CD4-positive, alpha-beta T cell (primary cell): ENCODE measurements at regions of chr3 and their contacts with region 1.

Region 1: GRCh38 chr3:32510075-32510724 is 7.5 kb upstream of the CMTM6 start:
- DNase-seq: peak; percentile 40 to 81 (median 58)
- ATAC-seq: peak; percentile 92
- H3K4me3 ChIP-seq: no peak overlapping the region
- H3K4me3 Mint-ChIP-seq: no peak overlapping the region
- H3K27ac ChIP-seq: no peak overlapping the region
- H3K27ac Mint-ChIP-seq: no peak overlapping the region
- H3K4me1 ChIP-seq: no peaks in the 10 kb centered on the region
- H3K4me1 Mint-ChIP-seq: no peaks in the 10 kb centered on the region
- H3K27me3 ChIP-seq: no peaks in the 10 kb centered on the region
- H3K27me3 Mint-ChIP-seq: no peaks in the 10 kb centered on the region
- CTCF ChIP-seq: peak; percentile 79

Region 2: GRCh38 chr3:32525720-32526119 is 15.5 kb after region 1 on chr3:
- CTCF ChIA-PET with region 1: no interaction called
- POLR2A ChIA-PET with region 1: no interaction called
- intact Hi-C with region 1: no loop called
- DNase-seq: no peak
- ATAC-seq: no peak
- H3K4me3 ChIP-seq: no peak overlapping the region
- H3K4me3 Mint-ChIP-seq: no peak overlapping the region
- H3K27ac ChIP-seq: no peak overlapping the region
- H3K27ac Mint-ChIP-seq: no peak overlapping the region
- H3K4me1 ChIP-seq: no peaks in the 10 kb centered on the region
- H3K4me1 Mint-ChIP-seq: no peaks in the 10 kb centered on the region
- H3K27me3 ChIP-seq: no peaks in the 10 kb centered on the region
- H3K27me3 Mint-ChIP-seq: no peaks in the 10 kb centered on the region
- CTCF ChIP-seq: no peak

Region 3: DNA sequence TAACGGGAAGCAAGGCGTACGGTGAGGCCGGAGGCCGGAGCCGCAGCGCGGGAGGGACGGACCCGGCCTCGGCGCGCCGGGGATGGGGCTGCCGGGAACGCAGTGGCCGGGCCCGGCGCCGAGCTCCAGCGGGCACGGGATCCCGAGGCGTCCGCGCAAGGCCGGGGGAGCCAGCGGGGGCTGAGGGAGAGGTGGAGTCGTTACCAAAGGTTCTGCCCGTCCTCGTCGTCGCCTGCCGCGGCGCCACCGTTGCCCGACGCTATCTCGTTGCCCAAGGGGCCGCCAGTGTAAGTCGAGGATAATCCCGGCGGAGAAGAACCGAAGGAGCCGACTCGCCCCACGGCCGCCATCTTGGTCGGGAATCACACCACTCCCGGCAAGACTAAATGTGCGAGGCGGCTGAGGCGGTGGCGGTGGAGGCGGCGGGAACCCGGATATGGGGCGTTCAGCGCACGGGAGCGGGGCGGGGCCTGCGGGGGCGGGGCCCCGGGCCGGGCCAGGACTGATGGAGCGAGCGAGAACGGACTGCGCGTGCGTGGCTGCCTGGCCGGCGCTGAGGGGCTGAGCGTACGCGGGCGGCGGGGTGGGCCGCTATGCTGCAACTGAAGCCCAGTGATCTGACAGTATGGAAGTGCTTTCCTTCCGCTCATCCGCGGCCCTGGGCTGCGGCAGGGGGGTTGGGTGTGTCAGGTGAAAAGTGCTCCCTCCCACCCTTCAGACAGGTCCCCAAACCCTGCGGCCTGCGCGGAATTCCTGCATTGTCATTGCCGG is 60.4 kb after region 1 on chr3 and contains the start of gene DYNC1LI1:
- CTCF ChIA-PET with region 1: interaction called, 3 read pairs
- POLR2A ChIA-PET with region 1: no interaction called
- intact Hi-C with region 1: loop called (anchors 2 to 10 kb)
- DNase-seq: peak; percentile 85 to 97 (median 92)
- ATAC-seq: peak; percentile 95
- H3K4me3 ChIP-seq: peak within 1 kb of the TSS; percentile 76
- H3K4me3 Mint-ChIP-seq: peak within 1 kb of the TSS; percentile 94
- H3K27ac ChIP-seq: peak within 1 kb of the TSS; percentile 72
- H3K27ac Mint-ChIP-seq: peak within 1 kb of the TSS; percentile 74
- H3K4me1 ChIP-seq: peaks cover 20% of the 10 kb centered on the region
- H3K4me1 Mint-ChIP-seq: peaks cover 40% of the 10 kb centered on the region
- H3K27me3 ChIP-seq: no peaks in the 10 kb centered on the region
- H3K27me3 Mint-ChIP-seq: no peaks in the 10 kb centered on the region
- CTCF ChIP-seq: no peak
- total RNA-seq, gene DYNC1LI1: 28.1 to 28.3 TPM

Region 4: GRCh38 chr3:32667122-32667521 is 156.9 kb after region 1 on chr3:
- CTCF ChIA-PET with region 1: no interaction called
- POLR2A ChIA-PET with region 1: no interaction called
- intact Hi-C with region 1: loop called (anchors 1 kb)
- DNase-seq: no peak
- ATAC-seq: no peak
- H3K4me3 ChIP-seq: no peak overlapping the region
- H3K4me3 Mint-ChIP-seq: no peak overlapping the region
- H3K27ac ChIP-seq: no peak overlapping the region
- H3K27ac Mint-ChIP-seq: no peak overlapping the region
- H3K4me1 ChIP-seq: no peaks in the 10 kb centered on the region
- H3K4me1 Mint-ChIP-seq: no peaks in the 10 kb centered on the region
- H3K27me3 ChIP-seq: no peaks in the 10 kb centered on the region
- H3K27me3 Mint-ChIP-seq: peaks cover 3% of the 10 kb centered on the region
- CTCF ChIP-seq: no peak

Region 5: DNA sequence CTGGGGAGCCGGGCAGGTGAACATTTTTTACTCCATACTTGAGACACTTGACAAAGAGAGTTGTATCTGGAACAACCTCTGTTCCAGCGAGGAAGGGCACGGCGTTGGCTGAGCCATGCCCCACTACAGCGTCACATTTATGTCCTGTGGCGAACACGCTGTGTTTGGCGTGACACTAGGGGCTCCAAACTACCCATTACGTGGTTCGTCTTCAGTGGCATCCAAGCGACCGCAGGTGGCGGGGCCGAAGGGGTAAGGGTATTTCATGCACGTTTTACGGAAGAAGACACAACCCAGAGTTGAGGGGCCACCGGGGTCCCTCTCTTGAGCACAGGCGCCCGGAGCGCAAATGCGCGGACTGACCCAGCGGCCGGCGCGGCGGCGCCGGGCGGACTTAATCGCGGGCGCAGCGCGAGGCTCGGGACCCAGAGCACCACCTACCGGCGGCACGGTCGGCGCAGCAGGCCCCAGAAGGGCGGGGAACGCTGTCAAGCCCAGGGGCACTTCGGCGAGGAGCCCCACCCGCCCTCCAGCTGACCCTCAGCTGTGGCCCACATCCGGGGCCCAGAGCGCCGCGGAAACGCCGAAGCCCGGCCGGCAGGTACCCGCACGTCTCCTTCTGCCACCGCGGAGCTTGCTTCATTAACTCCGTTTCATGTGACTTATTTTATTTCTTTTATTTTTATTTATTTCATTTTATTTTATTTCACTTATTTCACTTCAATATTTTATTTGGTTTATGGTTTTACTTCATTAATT is 271.2 kb after region 1 on chr3:
- CTCF ChIA-PET with region 1: no interaction called
- POLR2A ChIA-PET with region 1: no interaction called
- intact Hi-C with region 1: loop called (anchors 2 to 5 kb)
- DNase-seq: peak; percentile 7 to 76 (median 48)
- ATAC-seq: peak; percentile 73
- H3K4me3 ChIP-seq: peak overlapping the region; percentile 63
- H3K4me3 Mint-ChIP-seq: peak overlapping the region; percentile 92
- H3K27ac ChIP-seq: no peak overlapping the region
- H3K27ac Mint-ChIP-seq: no peak overlapping the region
- H3K4me1 ChIP-seq: peaks cover 14% of the 10 kb centered on the region
- H3K4me1 Mint-ChIP-seq: peaks cover 4% of the 10 kb centered on the region
- H3K27me3 ChIP-seq: peaks cover 0 to 4% of the 10 kb centered on the region in 2 experiments
- H3K27me3 Mint-ChIP-seq: peaks cover 4% of the 10 kb centered on the region
- CTCF ChIP-seq: peak; percentile 89

Region 6: GRCh38 chr3:33074217-33075067 is 564.2 kb after region 1 on chr3:
- CTCF ChIA-PET with region 1: no interaction called
- POLR2A ChIA-PET with region 1: no interaction called
- intact Hi-C with region 1: loop called (anchors 2 to 10 kb)
- DNase-seq: peak; percentile 59 to 85 (median 64)
- ATAC-seq: peak; percentile 81
- H3K4me3 ChIP-seq: no peak overlapping the region
- H3K4me3 Mint-ChIP-seq: no peak overlapping the region
- H3K27ac ChIP-seq: no peak overlapping the region
- H3K27ac Mint-ChIP-seq: no peak overlapping the region
- H3K4me1 ChIP-seq: peaks cover 8% of the 10 kb centered on the region
- H3K4me1 Mint-ChIP-seq: peaks cover 44% of the 10 kb centered on the region
- H3K27me3 ChIP-seq: no peaks in the 10 kb centered on the region
- H3K27me3 Mint-ChIP-seq: no peaks in the 10 kb centered on the region
- CTCF ChIP-seq: peak; percentile 81